ENCODE measurements at regions of chr20 and their contacts with region 1.

Region 1: GRCh38 chr20:4613718-4614620 is 107.7 kb upstream of the PRND start:
- DNase-seq: peak in 3 of 5 donors; percentile 48 to 67 (median 51)
- ATAC-seq: peak; percentile 37 to 80 (median 59)
- H3K4me3 ChIP-seq: no peak overlapping the region
- H3K27ac ChIP-seq: peak overlapping the region in 9 of 12 donors; percentile 32 to 66 (median 54)
- H3K4me1 ChIP-seq: peaks cover 0 to 20% (median 10%) of the 10 kb centered on the region in 12 donors
- H3K27me3 ChIP-seq: no peaks in the 10 kb centered on the region
- CTCF ChIP-seq: peak in 9 of 12 donors; percentile 18 to 51 (median 36)
- POLR2A ChIP-seq: no peak

Region 2: GRCh38 chr20:4119854-4120209 is 494.1 kb before region 1 on chr20:
- intact Hi-C with region 1: no loop called
- DNase-seq: no peak
- ATAC-seq: peak in 3 of 4 donors; percentile 55 to 70 (median 64)
- H3K4me3 ChIP-seq: no peak overlapping the region
- H3K27ac ChIP-seq: peak overlapping the region in 5 of 12 donors; percentile 29 to 68 (median 52)
- H3K4me1 ChIP-seq: peaks cover 0 to 38% (median 8%) of the 10 kb centered on the region in 12 donors
- H3K27me3 ChIP-seq: no peaks in the 10 kb centered on the region
- CTCF ChIP-seq: no peak
- POLR2A ChIP-seq: no peak

Region 3: GRCh38 chr20:4674672-4675071 is 60.7 kb after region 1 on chr20:
- intact Hi-C with region 1: loop called in 1 of 10 experiments (anchors 5 kb)
- DNase-seq: no peak
- ATAC-seq: no peak
- H3K4me3 ChIP-seq: no peak overlapping the region
- H3K27ac ChIP-seq: no peak overlapping the region
- H3K4me1 ChIP-seq: peaks cover 0 to 4% (median 0%) of the 10 kb centered on the region in 12 donors
- H3K27me3 ChIP-seq: no peaks in the 10 kb centered on the region
- CTCF ChIP-seq: no peak
- POLR2A ChIP-seq: no peak

Region 4: DNA sequence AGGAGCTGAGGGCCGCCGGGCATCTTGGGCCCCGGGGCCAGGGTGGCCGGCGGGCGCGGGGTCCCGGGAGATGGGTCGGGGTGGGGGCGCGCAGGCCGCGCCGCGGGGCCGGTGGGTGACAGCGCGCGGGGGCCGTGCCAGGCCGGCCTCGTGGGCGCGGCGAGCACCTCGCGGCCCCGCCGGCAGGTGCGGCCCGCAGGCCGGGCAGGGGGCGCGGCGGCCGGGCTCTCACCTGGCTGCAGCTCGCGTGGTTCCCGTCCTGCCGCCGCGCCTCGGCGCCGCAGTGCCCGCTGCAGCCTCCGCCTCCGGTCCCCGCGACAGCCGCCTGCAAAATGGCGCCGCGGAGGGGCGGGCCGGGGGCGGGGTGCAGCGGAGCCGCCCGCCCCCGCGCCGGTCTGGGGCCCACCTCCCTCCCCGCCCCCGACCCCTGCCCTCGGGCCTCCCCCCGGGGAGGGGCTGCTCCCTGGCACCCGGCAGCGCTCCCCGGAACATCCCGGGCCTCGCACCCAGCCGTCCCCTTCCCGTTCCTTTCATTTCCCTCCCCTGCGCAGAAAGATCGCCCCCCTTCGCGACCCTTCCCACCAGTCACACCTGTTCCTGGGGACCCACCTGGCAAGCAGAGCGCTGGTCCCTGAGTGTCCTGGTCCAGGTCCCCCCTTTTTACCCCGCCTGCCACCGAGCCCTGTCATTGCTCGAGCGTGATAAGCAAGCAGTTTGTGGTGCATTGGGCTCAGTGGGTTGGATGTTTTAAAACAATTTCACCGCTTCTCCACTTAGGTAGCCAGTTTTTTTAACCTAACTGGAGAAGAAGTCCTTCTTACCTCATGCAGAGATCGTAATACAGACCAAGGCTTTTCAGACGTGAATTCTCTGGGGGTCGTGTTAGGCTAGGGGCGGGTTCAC is 387.5 kb after region 1 on chr20 and contains the start of gene SLC23A2:
- intact Hi-C with region 1: no loop called
- DNase-seq: peak; percentile 37 to 70 (median 58)
- ATAC-seq: peak; percentile 25 to 88 (median 76)
- H3K4me3 ChIP-seq: peak within 1 kb of the TSS; percentile 69 to 97 (median 92)
- H3K27ac ChIP-seq: peak within 1 kb of the TSS in 5 of 12 donors; percentile 18 to 60 (median 52)
- H3K4me1 ChIP-seq: peaks cover 0 to 31% (median 10%) of the 10 kb centered on the region in 12 donors
- H3K27me3 ChIP-seq: no peaks in the 10 kb centered on the region
- CTCF ChIP-seq: no peak
- POLR2A ChIP-seq: no peak
- total RNA-seq, gene SLC23A2: 5.0 to 18.7 (median 8.4) TPM